ENCODE measurements at regions of chr14 and their contacts with region 1.

Region 1: DNA sequence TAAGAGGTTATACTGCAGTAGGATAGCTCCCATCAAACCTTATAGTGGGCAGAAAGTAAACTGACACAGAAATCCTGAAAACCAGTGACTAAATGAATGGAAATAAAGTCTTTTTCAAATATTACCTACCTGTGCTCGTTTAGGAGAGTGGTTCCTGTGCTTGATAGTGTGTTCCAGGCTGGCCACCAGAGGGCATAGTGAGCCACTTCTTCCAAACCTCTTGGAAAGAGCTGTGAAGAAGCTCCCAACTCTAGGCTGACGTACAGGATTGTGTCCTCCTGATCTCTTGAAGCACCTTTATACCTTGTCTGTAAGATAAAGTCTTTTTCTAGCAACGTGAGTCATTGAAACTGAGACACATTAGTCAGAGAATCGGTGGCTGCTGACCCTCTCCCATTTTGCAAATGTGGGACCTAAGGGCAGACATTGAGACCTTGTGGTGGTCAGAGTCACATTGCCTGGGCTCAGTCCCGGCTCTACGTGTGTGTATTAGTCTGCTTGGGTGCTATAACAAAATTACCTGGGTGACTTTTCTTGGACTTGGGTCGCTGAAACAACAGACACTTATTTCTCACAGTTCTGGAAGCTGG is 17.6 kb downstream of the TDP1 start:
- DNase-seq: peak; percentile 71 to 74
- ATAC-seq: peak; percentile 98 to 99
- H3K4me3 ChIP-seq: no peak overlapping the region
- H3K27ac ChIP-seq: no peak overlapping the region
- H3K4me1 ChIP-seq: no peaks in the 10 kb centered on the region
- CTCF ChIP-seq: peak; percentile 81
- EP300 ChIP-seq: no peak
- POLR2A ChIP-seq: no peak
- RAD21 ChIP-seq: peak; percentile 64 to 68

Region 2: GRCh38 chr14:89936658-89937185 is 36.6 kb before region 1 on chr14:
- CTCF ChIA-PET with region 1: interaction called, 14 read pairs
- POLR2A ChIA-PET with region 1: no interaction called
- DNase-seq: no peak
- ATAC-seq: no peak
- H3K4me3 ChIP-seq: no peak overlapping the region
- H3K27ac ChIP-seq: no peak overlapping the region
- H3K4me1 ChIP-seq: no peaks in the 10 kb centered on the region
- CTCF ChIP-seq: 0 out of 3 replicates have a peak, but pooled peaks have one; percentile 10
- EP300 ChIP-seq: no peak
- POLR2A ChIP-seq: no peak
- RAD21 ChIP-seq: no peak

Region 3: DNA sequence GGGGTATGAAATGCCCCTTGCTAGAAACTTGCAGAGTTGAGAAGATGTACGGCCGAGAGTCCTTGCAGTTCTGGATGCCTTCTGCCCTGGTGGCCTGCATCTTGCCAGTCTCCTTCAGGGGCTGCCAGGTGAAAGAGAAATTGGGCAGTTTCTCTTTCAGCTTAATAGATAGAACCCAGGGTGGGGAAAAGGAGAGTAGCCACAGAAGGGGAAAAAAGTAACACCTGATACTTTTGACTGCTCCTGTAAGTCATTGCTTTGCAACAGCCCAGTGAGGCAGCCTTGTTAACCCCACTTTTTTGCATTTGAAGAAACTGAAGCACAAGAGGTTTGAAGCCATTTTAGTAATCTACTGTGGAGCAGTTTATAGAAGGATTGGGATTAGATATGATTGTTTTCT is 10.0 kb after region 1 on chr14:
- CTCF ChIA-PET with region 1: interaction called, 92 read pairs
- POLR2A ChIA-PET with region 1: no interaction called
- DNase-seq: no peak
- ATAC-seq: no peak
- H3K4me3 ChIP-seq: no peak overlapping the region
- H3K27ac ChIP-seq: no peak overlapping the region
- H3K4me1 ChIP-seq: no peaks in the 10 kb centered on the region
- CTCF ChIP-seq: no peak
- EP300 ChIP-seq: no peak
- POLR2A ChIP-seq: no peak
- RAD21 ChIP-seq: no peak

Region 4: GRCh38 chr14:90003908-90004307 is 30.6 kb after region 1 on chr14:
- CTCF ChIA-PET with region 1: interaction called, 13 read pairs
- POLR2A ChIA-PET with region 1: no interaction called
- DNase-seq: no peak
- ATAC-seq: no peak
- H3K4me3 ChIP-seq: no peak overlapping the region
- H3K27ac ChIP-seq: no peak overlapping the region
- H3K4me1 ChIP-seq: no peaks in the 10 kb centered on the region
- CTCF ChIP-seq: no peak
- EP300 ChIP-seq: no peak
- POLR2A ChIP-seq: no peak
- RAD21 ChIP-seq: no peak

Region 5: DNA sequence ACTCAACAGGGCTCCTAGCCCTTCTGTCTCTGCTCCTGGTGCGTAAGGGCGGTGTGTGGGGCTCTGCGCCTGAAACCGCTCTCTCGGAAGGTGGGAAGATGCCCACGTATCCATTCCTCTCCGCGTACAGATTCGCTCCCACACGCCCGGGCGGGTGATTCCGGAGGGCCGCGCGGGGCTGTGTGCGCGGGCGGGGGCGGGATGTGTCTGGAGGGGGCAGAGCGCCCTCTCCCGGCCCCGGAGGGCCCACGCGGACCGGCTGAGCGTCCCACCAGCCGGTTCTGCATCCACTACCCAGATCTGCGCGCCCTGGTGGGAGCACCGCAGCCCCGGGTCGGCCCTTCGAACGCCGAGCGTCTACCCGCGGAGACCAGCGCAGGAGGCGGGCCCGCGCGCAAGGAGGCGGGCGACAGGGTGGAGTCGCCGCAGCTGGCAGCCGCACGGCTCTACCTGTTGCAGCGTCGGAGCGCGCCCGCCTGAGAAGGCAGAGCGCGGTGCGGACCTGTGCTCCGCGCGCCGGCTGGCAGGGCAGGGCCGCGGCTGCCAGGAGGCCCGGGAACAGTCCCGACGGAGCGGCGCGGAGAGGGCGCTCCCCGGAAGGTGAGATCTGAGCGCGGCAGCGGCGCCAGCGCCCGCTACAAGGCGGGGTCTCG is 87.1 kb after region 1 on chr14:
- CTCF ChIA-PET with region 1: interaction called, 23 read pairs
- POLR2A ChIA-PET with region 1: no interaction called
- DNase-seq: peak; percentile 48 to 64
- ATAC-seq: peak; percentile 84 to 88
- H3K4me3 ChIP-seq: peak overlapping the region; percentile 54
- H3K27ac ChIP-seq: peak overlapping the region in 1 of 2 experiments; percentile 38; a peak in 1 of 6 replicates
- H3K4me1 ChIP-seq: peaks cover 13% of the 10 kb centered on the region; the same call in 1 of the 3 replicates
- CTCF ChIP-seq: peak; percentile 52
- EP300 ChIP-seq: no peak
- POLR2A ChIP-seq: no peak
- RAD21 ChIP-seq: peak; percentile 28 to 60; a peak in 4 of 5 replicates

Region 6: GRCh38 chr14:90256354-90257131 is 283.2 kb after region 1 on chr14 and contains the start of gene PSMC1:
- CTCF ChIA-PET with region 1: interaction called, 10 read pairs
- POLR2A ChIA-PET with region 1: no interaction called
- DNase-seq: peak; percentile 83 to 96
- ATAC-seq: peak; percentile 98 to 99
- H3K4me3 ChIP-seq: peak within 1 kb of the TSS; percentile 98
- H3K27ac ChIP-seq: peak within 1 kb of the TSS; percentile 94 to 97
- H3K4me1 ChIP-seq: peaks cover 16% of the 10 kb centered on the region; the same call in 2 of the 3 replicates
- CTCF ChIP-seq: no peak
- EP300 ChIP-seq: no peak
- POLR2A ChIP-seq: peak; percentile 69
- RAD21 ChIP-seq: no peak
- polyA plus RNA-seq, gene PSMC1: 171 and 336 TPM in 2 replicates